ENCODE measurements at regions of chr22 and their contacts with region 1.

Region 1: GRCh38 chr22:37817705-37818408 is 5.3 kb upstream of the GALR3 start:
- DNase-seq: no peak
- H3K4me3 ChIP-seq: peak overlapping the region; percentile 35 to 46
- H3K27ac ChIP-seq: peak overlapping the region; percentile 42
- H3K4me1 ChIP-seq: peaks cover 20% of the 10 kb centered on the region
- H3K27me3 ChIP-seq: no peaks in the 10 kb centered on the region
- CTCF ChIP-seq: peak; percentile 94 to 97 (median 96)
- POLR2A ChIP-seq: no peak

Region 2: DNA sequence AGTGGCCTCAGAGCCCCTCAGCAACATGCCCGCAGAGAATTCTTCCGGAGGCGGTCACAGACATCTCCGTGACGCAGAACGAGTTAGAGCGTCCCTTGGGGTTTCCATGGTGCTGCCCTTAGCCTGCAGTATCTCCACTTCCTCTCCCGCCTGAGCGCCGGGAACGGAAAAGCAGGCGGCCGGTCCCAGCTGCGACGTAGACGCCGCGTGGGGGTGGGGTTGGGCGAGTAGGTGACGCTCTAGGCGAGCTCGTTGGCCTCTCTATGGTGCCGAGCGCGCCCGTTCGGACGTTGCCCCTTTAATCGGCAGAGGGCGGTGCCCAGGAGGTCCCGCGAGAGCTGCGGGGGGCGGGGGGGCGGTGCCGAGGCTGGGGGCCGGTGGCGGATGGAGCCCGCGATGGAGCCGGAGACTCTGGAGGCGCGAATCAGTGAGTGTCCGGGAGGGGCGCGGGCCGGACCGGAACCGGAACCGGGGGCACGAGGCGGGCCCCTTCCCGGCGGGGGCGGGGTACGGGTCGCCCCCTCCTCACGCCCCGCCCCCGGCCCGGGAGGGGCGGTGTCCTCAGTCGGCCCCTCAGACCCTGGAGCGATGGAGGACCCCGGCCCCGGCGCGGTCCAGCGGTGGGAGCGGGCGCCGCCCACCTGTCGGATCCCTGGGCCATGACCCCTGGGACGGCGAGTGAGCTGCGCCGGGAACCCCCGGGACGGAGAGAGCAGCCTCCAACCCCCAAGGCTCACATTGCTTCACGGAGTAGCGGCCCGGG is 209.2 kb before region 1 on chr22 and contains the start of gene GGA1:
- intact Hi-C with region 1: no loop called
- DNase-seq: peak in 1 of 2 donors; percentile 98
- H3K4me3 ChIP-seq: peak within 1 kb of the TSS; percentile 67 to 83
- H3K27ac ChIP-seq: peak within 1 kb of the TSS; percentile 89
- H3K4me1 ChIP-seq: peaks cover 57% of the 10 kb centered on the region
- H3K27me3 ChIP-seq: no peaks in the 10 kb centered on the region
- CTCF ChIP-seq: peak in 1 of 3 experiments; percentile 24
- POLR2A ChIP-seq: peak in 1 of 2 donors; percentile 19
- total RNA-seq, gene GGA1: 45.7 TPM

Region 3: GRCh38 chr22:37745548-37746365 is 72.1 kb before region 1 on chr22:
- intact Hi-C with region 1: loop called (anchors 2 kb)
- DNase-seq: no peak
- H3K4me3 ChIP-seq: peak overlapping the region; percentile 73 to 78
- H3K27ac ChIP-seq: peak overlapping the region; percentile 93
- H3K4me1 ChIP-seq: peaks cover 75% of the 10 kb centered on the region
- H3K27me3 ChIP-seq: no peaks in the 10 kb centered on the region
- CTCF ChIP-seq: no peak
- POLR2A ChIP-seq: peak in 1 of 2 donors; percentile 43

Region 4: DNA sequence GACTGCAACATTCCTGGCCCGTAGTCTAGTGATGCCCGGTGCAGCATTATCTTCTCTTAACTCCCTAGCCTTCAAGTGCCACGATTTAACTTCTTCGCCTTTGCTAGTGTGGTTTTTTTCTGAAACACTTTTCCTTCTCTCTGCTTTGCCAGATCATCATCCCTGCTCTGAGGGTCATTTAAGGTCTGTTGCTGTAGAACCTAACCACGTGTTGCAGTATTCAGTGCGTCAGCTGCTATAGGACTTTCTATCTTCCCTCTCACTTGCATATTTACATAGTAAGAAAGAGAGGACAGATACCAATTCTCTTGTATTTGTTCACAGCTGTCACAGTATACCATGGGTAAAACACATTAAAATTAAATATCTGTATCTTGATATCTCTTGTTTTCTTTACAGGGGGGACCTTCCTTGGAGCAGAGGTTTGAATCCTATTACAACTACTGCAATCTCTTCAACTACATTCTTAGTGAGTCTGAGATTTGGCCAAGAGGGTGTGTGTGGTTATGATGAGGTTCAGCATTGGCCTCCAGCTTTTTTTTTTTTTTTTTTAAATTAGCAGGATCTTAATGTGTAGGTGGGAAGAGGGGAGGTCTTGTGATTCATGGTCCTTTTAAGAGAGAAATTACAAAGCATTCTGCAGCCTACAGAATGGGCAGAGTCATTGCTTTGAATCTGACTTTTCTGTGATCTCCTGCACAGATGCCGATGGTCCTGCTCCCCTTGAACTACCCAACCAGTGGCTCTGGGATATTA is 44.9 kb after region 1 on chr22:
- intact Hi-C with region 1: loop called (anchors 5 kb)
- DNase-seq: no peak
- H3K4me3 ChIP-seq: no peak overlapping the region
- H3K27ac ChIP-seq: no peak overlapping the region
- H3K4me1 ChIP-seq: no peaks in the 10 kb centered on the region
- H3K27me3 ChIP-seq: no peaks in the 10 kb centered on the region
- CTCF ChIP-seq: no peak
- POLR2A ChIP-seq: no peak

Region 5: DNA sequence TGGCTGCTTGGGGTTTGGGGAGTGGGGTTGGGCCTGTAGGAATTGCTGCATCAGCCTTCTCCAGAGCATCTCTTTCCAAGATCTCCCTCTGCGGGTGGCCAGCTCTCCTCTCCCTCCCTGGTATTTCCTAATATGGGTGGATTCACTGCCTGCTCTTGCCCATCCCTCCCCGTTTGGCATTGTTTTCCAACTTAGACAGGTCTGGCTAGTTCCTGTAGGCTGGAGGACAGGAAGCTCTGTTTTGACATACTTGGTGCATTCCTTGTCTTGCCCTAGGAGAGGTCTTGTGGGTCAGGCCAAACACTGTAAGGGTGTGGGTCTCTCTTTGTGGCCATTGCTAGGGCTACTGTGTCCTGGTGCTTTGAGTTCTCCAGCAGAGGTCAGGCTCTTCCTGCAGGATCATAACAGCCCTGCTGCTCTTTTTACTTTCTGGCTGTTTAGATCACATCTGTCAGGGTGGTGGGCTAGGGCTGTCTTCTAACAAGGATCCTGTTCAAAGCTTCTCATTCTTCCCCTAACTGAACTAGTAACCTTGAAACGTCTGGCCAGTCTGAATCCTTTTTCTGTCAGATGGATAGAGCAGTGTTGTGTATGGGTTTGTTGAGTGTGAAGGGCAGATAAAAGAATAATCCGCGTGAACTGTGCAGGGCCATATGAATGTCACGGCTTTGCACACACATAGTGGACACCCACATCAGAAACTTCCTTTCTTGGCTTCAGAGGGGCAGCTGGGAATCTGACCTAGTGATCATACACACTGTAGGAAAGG is 69.9 kb after region 1 on chr22:
- intact Hi-C with region 1: no loop called
- DNase-seq: no peak
- H3K4me3 ChIP-seq: no peak overlapping the region
- H3K27ac ChIP-seq: peak overlapping the region; percentile 78
- H3K4me1 ChIP-seq: peaks cover 46% of the 10 kb centered on the region
- H3K27me3 ChIP-seq: no peaks in the 10 kb centered on the region
- CTCF ChIP-seq: peak in 2 of 3 experiments; percentile 48 to 54
- POLR2A ChIP-seq: no peak

Region 6: DNA sequence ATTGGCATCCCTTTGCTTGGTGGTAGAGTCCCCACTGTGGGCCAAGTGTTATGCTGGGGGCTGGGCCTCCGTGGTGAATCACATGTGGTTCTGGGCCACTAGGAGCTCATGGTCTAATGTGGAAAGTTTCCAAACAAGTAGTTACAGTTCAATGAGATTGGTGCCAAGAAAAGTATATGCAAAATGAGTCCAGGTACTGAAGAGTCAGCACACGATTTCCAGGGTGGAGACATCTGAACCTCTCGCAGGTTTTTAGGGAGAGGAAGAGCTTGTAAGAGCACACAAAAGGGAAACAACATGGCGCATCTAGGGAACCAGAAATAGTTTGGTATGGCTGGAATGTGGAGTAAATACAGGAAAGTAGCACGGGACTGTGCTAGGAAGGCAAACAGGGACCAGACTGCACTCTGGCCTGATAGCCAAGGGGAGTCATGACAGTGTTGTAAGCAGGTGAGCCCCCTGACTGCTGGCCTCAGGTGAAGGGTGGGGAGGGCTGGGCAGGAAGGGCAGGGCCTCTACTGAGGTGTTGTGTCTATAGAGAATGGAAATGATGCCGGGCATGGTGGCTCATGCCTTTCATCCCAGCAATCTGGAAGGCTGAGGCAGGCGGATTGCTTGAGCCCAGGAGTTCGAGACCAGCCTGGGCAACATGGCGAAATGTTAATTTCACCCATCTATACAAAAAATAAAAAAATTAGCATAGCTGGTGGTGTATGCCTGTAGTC is 148.2 kb after region 1 on chr22:
- intact Hi-C with region 1: loop called (anchors 2 kb)
- DNase-seq: no peak
- H3K4me3 ChIP-seq: no peak overlapping the region
- H3K27ac ChIP-seq: no peak overlapping the region
- H3K4me1 ChIP-seq: no peaks in the 10 kb centered on the region
- H3K27me3 ChIP-seq: no peaks in the 10 kb centered on the region
- CTCF ChIP-seq: no peak
- POLR2A ChIP-seq: no peak